Mammary epithelial cell (primary cell): ENCODE measurements at regions of chr6 and their contacts with region 1.

Region 1: DNA sequence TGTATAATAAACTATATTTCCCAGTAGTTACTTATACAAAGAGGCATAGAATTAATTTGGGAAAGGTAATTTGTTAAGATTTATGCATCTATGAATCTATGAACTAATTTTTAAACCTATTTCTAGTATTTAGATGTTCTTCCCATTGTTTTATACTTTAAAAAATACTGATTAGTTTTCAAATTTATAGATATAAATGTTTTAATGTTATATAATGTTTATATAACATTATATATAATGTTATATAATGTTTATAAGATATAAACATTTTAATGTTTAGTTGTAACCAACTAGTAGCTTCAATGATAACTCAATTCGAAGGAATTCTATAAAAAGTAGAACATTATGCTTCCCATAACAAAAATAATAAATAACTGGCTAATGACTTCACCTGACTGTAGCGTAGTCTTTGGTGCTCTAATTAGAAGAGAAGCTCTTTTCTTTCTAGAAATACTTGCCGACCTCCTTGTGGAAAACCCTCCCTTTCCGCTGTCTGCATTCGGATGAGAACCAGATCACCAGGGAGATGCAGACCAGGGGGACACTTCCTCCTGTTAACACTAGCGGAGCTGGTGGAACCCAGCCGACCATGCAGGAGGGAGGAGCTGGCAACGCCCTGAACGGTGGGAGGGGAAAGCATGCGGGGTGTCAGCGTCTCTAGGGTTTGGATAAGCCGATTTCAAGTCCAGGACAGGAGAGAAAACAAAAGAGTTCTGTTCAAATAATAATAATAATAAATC is 158.4 kb downstream of the OR2B2 start:
- DNase-seq: peak; percentile 81
- H3K4me3 ChIP-seq: peak overlapping the region; percentile 49 to 86 (median 80)
- H3K27ac ChIP-seq: peak overlapping the region; percentile 27
- H3K4me1 ChIP-seq: no peaks in the 10 kb centered on the region
- H3K27me3 ChIP-seq: no peaks in the 10 kb centered on the region
- CTCF ChIP-seq: peak in 1 of 2 donors; percentile 39

Region 2: DNA sequence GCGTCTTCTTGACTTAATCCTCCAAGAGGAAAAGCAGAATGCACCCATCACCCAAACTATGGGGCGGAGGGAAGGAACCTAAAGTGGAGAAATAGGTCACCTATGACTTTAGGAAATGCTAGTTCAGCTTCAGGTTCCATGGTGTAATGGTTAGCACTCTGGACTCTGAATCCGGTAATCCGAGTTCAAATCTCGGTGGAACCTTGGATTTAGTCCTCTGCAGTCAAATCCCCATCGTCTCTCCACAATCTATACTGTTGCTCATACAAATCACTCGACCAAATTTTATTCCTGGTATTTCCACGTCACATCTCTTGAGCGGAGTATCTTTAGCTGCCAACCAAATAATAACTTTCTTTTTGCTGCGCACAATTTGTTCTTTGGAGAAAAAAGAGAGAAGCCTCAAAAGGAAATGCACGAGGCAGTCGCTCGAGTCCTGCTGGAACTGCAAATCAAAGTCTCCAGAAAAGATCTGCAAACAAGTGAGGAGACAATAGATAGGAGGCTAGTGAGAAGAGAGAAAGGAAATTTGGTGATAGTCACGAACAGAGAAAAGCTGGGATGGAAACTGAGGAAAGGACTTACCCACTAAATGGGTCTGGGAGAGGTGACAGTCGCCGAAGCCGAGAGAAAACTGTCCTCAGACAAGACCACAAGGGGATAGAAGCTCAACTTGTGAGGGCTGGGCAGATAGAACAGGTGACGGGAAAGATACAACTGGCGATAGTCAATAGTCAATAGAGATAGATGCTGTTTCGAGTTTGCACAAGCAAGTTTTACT is 458.3 kb before region 1 on chr6:
- CTCF ChIA-PET with region 1: interaction called, 3 read pairs
- dilution Hi-C with region 1: no loop called
- in situ Hi-C with region 1: no loop called
- intact Hi-C with region 1: loop called (anchors 5 kb)
- DNase-seq: peak; percentile 82
- H3K4me3 ChIP-seq: peak overlapping the region; percentile 54 to 77 (median 63)
- H3K27ac ChIP-seq: no peak overlapping the region
- H3K4me1 ChIP-seq: peaks cover 4% of the 10 kb centered on the region
- H3K27me3 ChIP-seq: no peaks in the 10 kb centered on the region
- CTCF ChIP-seq: no peak

Region 3: GRCh38 chr6:27472617-27473400 is 281.0 kb before region 1 on chr6 and contains the start of gene ZNF184:
- CTCF ChIA-PET with region 1: no interaction called
- dilution Hi-C with region 1: no loop called
- in situ Hi-C with region 1: no loop called
- intact Hi-C with region 1: loop called (anchors 10 kb)
- DNase-seq: peak; percentile 99
- H3K4me3 ChIP-seq: peak within 1 kb of the TSS; percentile 59 to 79 (median 63)
- H3K27ac ChIP-seq: peak within 1 kb of the TSS; percentile 86
- H3K4me1 ChIP-seq: peaks cover 6% of the 10 kb centered on the region
- H3K27me3 ChIP-seq: no peaks in the 10 kb centered on the region
- CTCF ChIP-seq: no peak
- total RNA-seq, gene ZNF184: 3.4 to 7.2 TPM

Region 4: GRCh38 chr6:27592481-27593199 is 161.2 kb before region 1 on chr6:
- CTCF ChIA-PET with region 1: interaction called, 5 read pairs
- dilution Hi-C with region 1: no loop called
- in situ Hi-C with region 1: no loop called
- intact Hi-C with region 1: loop called (anchors 5 kb)
- DNase-seq: peak; percentile 84
- H3K4me3 ChIP-seq: peak overlapping the region; percentile 43 to 62 (median 48)
- H3K27ac ChIP-seq: no peak overlapping the region
- H3K4me1 ChIP-seq: peaks cover 13% of the 10 kb centered on the region
- H3K27me3 ChIP-seq: no peaks in the 10 kb centered on the region
- CTCF ChIP-seq: no peak

Region 5: GRCh38 chr6:27720607-27721580 is 32.9 kb before region 1 on chr6:
- CTCF ChIA-PET with region 1: no interaction called
- dilution Hi-C with region 1: no loop called
- in situ Hi-C with region 1: no loop called
- intact Hi-C with region 1: loop called (anchors 2 kb)
- DNase-seq: peak; percentile 73
- H3K4me3 ChIP-seq: no peak overlapping the region
- H3K27ac ChIP-seq: peak overlapping the region; percentile 41
- H3K4me1 ChIP-seq: peaks cover 9% of the 10 kb centered on the region
- H3K27me3 ChIP-seq: no peaks in the 10 kb centered on the region
- CTCF ChIP-seq: no peak

Region 6: DNA sequence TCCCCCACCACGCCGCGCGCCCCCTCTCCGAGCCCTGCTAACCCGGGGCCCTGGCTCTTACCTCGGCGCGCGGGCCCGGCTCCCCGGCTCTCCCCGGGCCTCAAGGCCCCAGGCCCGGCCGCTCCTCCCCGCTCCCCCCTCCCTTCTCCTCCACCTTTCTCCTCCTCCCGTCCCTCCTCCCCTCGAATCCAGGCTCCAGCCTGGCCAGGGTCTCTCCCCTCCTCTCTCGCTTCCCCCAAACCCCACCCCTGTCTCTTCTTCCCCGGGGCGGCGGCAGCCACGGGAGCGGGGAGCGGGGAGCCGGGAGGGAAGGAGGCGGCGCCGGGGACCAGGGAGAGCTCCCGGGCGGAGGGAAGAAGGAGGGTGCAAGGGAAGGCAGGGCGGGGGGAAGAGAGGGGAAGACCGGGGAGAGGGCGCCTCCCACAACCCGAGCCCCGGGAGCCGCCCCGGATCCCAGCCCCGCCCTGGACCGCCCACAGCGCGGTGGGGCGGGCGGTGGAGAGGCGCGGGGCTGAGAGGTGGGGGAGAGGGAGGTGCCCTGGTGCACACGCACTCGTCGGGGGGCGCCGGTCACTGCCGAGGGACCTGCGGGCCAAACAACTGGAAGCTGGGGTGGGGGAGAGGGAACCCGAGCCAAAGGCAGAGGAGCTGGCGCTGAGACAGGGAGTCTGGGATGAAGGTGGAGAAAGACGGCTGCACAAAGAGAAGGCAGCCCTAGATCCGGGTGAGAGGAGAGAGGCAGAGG is 1879.1 kb after region 1 on chr6 and contains the start of gene GABBR1:
- CTCF ChIA-PET with region 1: interaction called, 11 read pairs
- dilution Hi-C with region 1: no loop called
- in situ Hi-C with region 1: no loop called
- intact Hi-C with region 1: no loop called
- DNase-seq: peak; percentile 92
- H3K4me3 ChIP-seq: peak within 1 kb of the TSS; percentile 60 to 84 (median 65)
- H3K27ac ChIP-seq: peak within 1 kb of the TSS; percentile 22
- H3K4me1 ChIP-seq: peaks cover 43% of the 10 kb centered on the region
- H3K27me3 ChIP-seq: no peaks in the 10 kb centered on the region
- CTCF ChIP-seq: no peak
- total RNA-seq, gene GABBR1: 14.5 to 78.4 TPM